Heart right ventricle (tissue), 16 donors: ENCODE measurements at regions of chr12 and their contacts with region 1.

Region 1: DNA sequence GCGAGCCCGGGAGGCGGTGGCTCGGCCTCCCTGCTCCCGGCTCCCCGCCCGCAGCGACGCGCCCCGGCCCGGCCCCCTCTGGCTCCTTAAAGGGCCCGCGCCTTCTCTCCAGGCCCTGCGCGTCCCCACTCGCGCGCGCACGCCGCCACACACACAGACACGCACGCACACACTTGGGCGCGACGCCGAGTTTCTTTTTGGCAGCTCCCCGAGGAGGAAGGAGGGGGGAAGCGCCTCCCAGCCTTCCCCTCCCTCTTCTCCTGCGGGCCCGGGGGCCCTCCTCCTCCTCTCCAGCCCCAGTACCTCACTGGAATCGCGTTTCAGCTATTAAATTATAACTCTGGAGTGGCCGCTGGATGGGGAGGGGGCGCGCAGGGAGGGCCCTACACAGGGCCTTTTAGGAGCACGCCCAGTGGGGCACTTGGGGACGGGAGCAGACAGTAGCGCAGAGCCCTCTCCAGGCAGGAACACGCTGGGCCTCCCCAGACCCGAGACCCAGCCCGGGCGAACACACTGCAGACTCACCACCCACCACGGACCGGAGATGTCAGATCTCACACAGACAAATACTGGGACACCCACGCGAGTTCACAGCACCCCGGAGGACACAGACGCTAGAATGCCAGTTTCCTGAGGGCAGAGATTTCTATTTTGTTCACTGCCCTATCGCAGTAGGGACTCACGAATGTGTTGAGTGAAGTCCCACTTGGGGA is 405 bp upstream of the NCOR2 start:
- DNase-seq: peak; percentile 96 to 97
- ATAC-seq: peak; percentile 83 to 92 (median 88)
- H3K4me3 ChIP-seq: peak overlapping the region in 9 of 10 donors; percentile 24 to 99 (median 49)
- H3K27ac ChIP-seq: peak overlapping the region; percentile 44 to 95 (median 90)
- H3K4me1 ChIP-seq: peaks cover 19 to 57% (median 46%) of the 10 kb centered on the region in 9 donors
- H3K27me3 ChIP-seq: no peaks in the 10 kb centered on the region
- CTCF ChIP-seq: peak in 3 of 9 donors; percentile 25 to 32 (median 32)

Region 2: GRCh38 chr12:124053851-124054250 is 514.0 kb before region 1 on chr12:
- intact Hi-C with region 1: loop called in 2 of 10 experiments (anchors 10 kb)
- DNase-seq: peak; percentile 34 to 66
- ATAC-seq: peak; percentile 79 to 92 (median 92)
- H3K4me3 ChIP-seq: no peak overlapping the region
- H3K27ac ChIP-seq: no peak overlapping the region
- H3K4me1 ChIP-seq: peaks cover 0 to 19% (median 6%) of the 10 kb centered on the region in 9 donors
- H3K27me3 ChIP-seq: no peaks in the 10 kb centered on the region
- CTCF ChIP-seq: peak; percentile 39 to 85 (median 70)

Region 3: GRCh38 chr12:124379938-124380754 is 187.7 kb before region 1 on chr12:
- intact Hi-C with region 1: loop called in 4 of 10 experiments (anchors 10 kb)
- DNase-seq: peak; percentile 62 to 78
- ATAC-seq: peak; percentile 36 to 69 (median 59)
- H3K4me3 ChIP-seq: peak overlapping the region in 2 of 10 donors; percentile 9 to 23
- H3K27ac ChIP-seq: peak overlapping the region; percentile 82 to 99 (median 87)
- H3K4me1 ChIP-seq: peaks cover 38 to 70% (median 54%) of the 10 kb centered on the region in 9 donors
- H3K27me3 ChIP-seq: no peaks in the 10 kb centered on the region
- CTCF ChIP-seq: peak; percentile 29 to 73 (median 61)

Region 4: GRCh38 chr12:124422570-124423523 is 145.0 kb before region 1 on chr12:
- intact Hi-C with region 1: loop called in 1 of 10 experiments (anchors 10 kb)
- DNase-seq: peak; percentile 94
- ATAC-seq: peak; percentile 73 to 89 (median 84)
- H3K4me3 ChIP-seq: peak overlapping the region in 8 of 10 donors; percentile 5 to 28 (median 18)
- H3K27ac ChIP-seq: peak overlapping the region; percentile 88 to 97 (median 92)
- H3K4me1 ChIP-seq: peaks cover 34 to 73% (median 58%) of the 10 kb centered on the region in 9 donors
- H3K27me3 ChIP-seq: no peaks in the 10 kb centered on the region
- CTCF ChIP-seq: no peak

Region 5: GRCh38 chr12:124518051-124518932 is 49.5 kb before region 1 on chr12:
- intact Hi-C with region 1: loop called in 7 of 10 experiments (anchors 2 to 10 kb)
- DNase-seq: peak; percentile 98 to 99
- ATAC-seq: peak; percentile 67 to 86 (median 78)
- H3K4me3 ChIP-seq: peak overlapping the region in 9 of 10 donors; percentile 41 to 68 (median 61)
- H3K27ac ChIP-seq: peak overlapping the region; percentile 82 to 100 (median 97)
- H3K4me1 ChIP-seq: peaks cover 43 to 99% (median 86%) of the 10 kb centered on the region in 9 donors
- H3K27me3 ChIP-seq: no peaks in the 10 kb centered on the region
- CTCF ChIP-seq: no peak

Region 6: DNA sequence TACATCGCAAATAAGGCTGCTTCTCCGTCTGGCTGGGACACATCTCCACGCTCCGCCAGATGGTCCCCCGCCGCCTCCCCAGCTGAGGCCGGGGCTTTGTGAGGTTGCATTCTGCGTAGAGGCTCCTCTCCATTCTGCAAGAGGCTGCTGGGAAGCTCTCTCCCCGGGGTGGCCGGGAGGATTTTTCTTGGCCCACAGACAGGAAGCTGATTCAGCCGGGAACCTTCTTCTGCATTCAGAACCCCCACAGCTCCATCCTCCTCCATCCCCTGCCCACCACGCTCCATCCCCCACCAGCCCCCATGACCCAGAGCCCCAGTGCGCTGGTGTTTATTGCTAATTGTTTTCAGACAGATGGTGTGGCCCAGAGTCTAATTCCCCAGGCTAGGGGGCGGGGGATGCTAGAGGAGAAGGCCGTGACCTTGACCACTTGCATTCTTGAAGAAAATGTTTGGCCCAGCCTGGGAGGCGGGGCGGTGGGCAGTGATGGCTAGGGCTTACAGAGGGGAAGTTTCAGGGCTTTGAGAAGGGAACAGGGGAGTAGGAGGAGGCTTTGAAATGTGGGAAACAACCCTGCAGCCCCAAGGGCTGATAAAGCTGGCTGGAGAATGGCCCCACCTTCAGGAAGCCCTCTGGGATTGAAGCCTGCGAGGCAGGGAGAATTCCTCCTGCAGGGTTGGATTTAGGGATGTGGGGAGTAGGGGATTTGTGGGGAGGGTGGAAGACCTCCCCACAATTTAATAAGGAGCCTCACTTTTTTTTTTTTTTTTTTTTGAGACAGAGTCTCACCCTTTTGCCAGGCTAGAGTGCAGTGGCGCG is 88.1 kb after region 1 on chr12:
- intact Hi-C with region 1: loop called in 1 of 10 experiments (anchors 10 kb)
- DNase-seq: peak; percentile 80 to 87
- ATAC-seq: peak; percentile 77 to 84 (median 83)
- H3K4me3 ChIP-seq: peak overlapping the region in 7 of 10 donors; percentile 13 to 38 (median 30)
- H3K27ac ChIP-seq: peak overlapping the region; percentile 68 to 96 (median 86)
- H3K4me1 ChIP-seq: peaks cover 24 to 61% (median 56%) of the 10 kb centered on the region in 9 donors
- H3K27me3 ChIP-seq: no peaks in the 10 kb centered on the region
- CTCF ChIP-seq: peak in 1 of 9 donors; percentile 14

Region 7: DNA sequence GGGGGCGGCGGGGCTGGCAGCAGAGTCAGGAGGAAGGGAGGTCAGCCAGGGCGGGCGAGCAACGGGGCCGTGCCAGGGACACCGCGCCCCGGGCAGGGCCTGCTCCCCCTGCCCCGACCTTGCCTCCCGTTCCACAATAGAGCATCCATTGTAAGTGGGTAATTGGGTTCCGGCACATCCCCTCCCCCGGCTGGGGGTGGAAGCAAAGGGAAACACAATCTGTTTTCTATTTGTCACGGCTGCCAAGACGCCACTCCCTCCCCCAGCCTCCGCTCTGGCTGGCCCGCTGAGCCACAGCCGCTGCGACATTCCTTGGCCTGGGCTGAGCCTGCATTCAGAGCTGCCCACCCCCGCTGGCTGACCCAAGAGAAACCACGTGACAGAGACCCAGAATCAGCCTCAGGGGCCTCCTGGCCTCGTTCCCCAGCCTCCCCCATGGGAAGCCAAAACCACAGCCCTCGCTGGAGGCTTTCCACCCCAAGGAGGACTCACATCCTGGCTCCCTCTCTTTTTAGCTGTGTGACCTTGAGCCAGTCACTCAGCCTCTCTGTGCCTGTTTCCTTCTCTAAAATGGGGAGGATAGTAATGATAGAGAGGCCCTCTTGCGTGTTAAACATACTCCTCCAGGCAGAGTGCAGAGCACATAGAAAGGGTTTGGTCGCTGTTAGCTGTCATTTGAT is 178.2 kb after region 1 on chr12:
- intact Hi-C with region 1: loop called in 1 of 10 experiments (anchors 5 kb)
- DNase-seq: peak; percentile 92 to 95
- ATAC-seq: peak; percentile 95 to 97 (median 96)
- H3K4me3 ChIP-seq: peak overlapping the region in 5 of 10 donors; percentile 4 to 24 (median 7)
- H3K27ac ChIP-seq: peak overlapping the region; percentile 59 to 91 (median 88)
- H3K4me1 ChIP-seq: peaks cover 6 to 42% (median 22%) of the 10 kb centered on the region in 9 donors
- H3K27me3 ChIP-seq: no peaks in the 10 kb centered on the region
- CTCF ChIP-seq: no peak